MCF 10A (cell line): ENCODE measurements at regions of chr9 and their contacts with region 1.

Region 1: GRCh38 chr9:33024966-33025571 is at the start of gene DNAJA1:
- DNase-seq: peak; percentile 93
- H3K4me3 Mint-ChIP-seq: peak within 1 kb of the TSS; percentile 93
- H3K27ac Mint-ChIP-seq: peak within 1 kb of the TSS; percentile 94
- H3K4me1 Mint-ChIP-seq: peaks cover 41% of the 10 kb centered on the region
- H3K27me3 Mint-ChIP-seq: no peaks in the 10 kb centered on the region
- CTCF ChIP-seq: no peak
- total RNA-seq, gene DNAJA1: 58.2 and 82.7 TPM in 2 replicates

Region 2: GRCh38 chr9:32992595-32993238 is 32.4 kb before region 1 on chr9:
- CTCF ChIA-PET with region 1: no interaction called
- POLR2A ChIA-PET with region 1: interaction called, 109 read pairs
- intact Hi-C with region 1: no loop called
- DNase-seq: no peak
- H3K4me3 Mint-ChIP-seq: no peak overlapping the region
- H3K27ac Mint-ChIP-seq: no peak overlapping the region
- H3K4me1 Mint-ChIP-seq: peaks cover 9% of the 10 kb centered on the region
- H3K27me3 Mint-ChIP-seq: no peaks in the 10 kb centered on the region
- CTCF ChIP-seq: no peak

Region 3: DNA sequence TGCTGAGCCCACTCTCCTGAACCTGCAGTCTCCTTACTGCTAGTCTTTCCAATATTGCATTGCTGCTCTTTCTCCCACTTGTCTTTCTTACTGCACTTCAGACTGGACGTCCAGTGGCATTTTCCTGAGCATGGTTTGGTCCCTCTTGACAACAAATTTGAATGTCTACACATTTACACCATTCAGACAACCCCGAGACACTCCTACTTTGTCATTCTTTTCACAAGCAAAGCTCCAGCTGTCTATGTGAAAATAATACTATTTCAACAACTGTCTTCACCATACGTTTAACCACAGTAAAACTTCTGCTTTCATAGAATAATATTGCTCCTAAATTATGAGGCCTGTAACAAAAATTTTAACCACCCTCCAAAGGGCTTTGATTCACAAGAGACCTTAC is 13.2 kb before region 1 on chr9:
- CTCF ChIA-PET with region 1: interaction called, 3 read pairs
- POLR2A ChIA-PET with region 1: interaction called, 31 read pairs
- intact Hi-C with region 1: no loop called
- DNase-seq: no peak
- H3K4me3 Mint-ChIP-seq: no peak overlapping the region
- H3K27ac Mint-ChIP-seq: no peak overlapping the region
- H3K4me1 Mint-ChIP-seq: peaks cover 9% of the 10 kb centered on the region
- H3K27me3 Mint-ChIP-seq: no peaks in the 10 kb centered on the region
- CTCF ChIP-seq: no peak

Region 4: GRCh38 chr9:33044127-33044673 is 19.1 kb after region 1 on chr9:
- CTCF ChIA-PET with region 1: interaction called, 3 read pairs
- POLR2A ChIA-PET with region 1: interaction called, 153 read pairs
- intact Hi-C with region 1: no loop called
- DNase-seq: peak; percentile 88
- H3K4me3 Mint-ChIP-seq: peak overlapping the region; percentile 72
- H3K27ac Mint-ChIP-seq: peak overlapping the region; percentile 64
- H3K4me1 Mint-ChIP-seq: peaks cover 22% of the 10 kb centered on the region
- H3K27me3 Mint-ChIP-seq: no peaks in the 10 kb centered on the region
- CTCF ChIP-seq: no peak

Region 5: GRCh38 chr9:33264473-33265177 is 239.6 kb after region 1 on chr9 and contains the starts of genes BAG1 and CHMP5:
- CTCF ChIA-PET with region 1: no interaction called
- POLR2A ChIA-PET with region 1: interaction called, 12 read pairs
- intact Hi-C with region 1: no loop called
- DNase-seq: peak; percentile 99
- H3K4me3 Mint-ChIP-seq: peak within 1 kb of the TSS; percentile 99
- H3K27ac Mint-ChIP-seq: peak within 1 kb of the TSS; percentile 95
- H3K4me1 Mint-ChIP-seq: peaks cover 33% of the 10 kb centered on the region
- H3K27me3 Mint-ChIP-seq: no peaks in the 10 kb centered on the region
- CTCF ChIP-seq: no peak
- total RNA-seq, gene BAG1: 75.7 and 91.8 TPM in 2 replicates
- total RNA-seq, gene CHMP5: 67.6 and 85.1 TPM in 2 replicates